Left cardiac atrium (tissue), 4 donors: ENCODE measurements at regions of chr12 and their contacts with region 1.

Region 1: DNA sequence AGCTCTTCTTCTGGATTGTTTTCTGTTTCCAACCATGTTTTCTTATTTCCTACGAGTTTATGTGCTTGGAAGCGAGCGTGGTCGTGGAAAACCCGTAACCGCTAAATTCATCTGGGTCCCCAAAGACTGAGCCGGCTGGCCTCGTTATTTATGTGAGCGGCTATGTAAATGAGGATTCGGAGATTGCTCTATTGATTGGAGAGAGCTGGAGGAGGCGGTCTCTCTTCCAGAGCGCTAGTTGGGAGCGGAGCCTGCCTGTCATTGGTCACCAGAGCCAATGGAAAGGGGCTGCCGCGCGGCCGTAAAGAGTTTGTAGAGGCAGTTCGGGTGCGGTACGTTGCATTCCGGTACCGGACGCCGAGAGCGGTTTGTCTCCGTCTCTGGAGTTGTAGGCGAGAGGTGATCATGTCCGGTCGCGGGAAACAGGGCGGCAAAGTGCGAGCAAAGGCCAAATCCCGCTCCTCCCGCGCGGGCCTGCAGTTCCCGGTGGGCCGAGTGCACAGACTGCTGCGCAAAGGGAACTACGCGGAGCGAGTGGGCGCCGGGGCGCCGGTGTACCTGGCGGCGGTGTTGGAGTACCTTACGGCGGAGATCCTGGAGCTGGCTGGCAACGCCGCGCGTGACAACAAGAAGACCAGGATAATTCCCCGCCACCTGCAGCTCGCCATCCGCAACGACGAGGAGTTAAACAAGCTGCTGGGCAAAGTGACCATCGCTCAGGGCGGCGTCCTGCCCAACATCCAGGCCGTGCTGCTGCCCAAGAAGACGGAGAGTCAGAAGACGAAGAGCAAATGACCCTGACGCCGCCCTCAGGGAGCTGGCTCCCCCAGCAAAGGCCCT is 29.0 kb downstream of the WBP11 start:
- DNase-seq: peak; percentile 96
- ATAC-seq: peak; percentile 85 to 88

Region 2: GRCh38 chr12:14239350-14239934 is 534.8 kb before region 1 on chr12:
- intact Hi-C with region 1: no loop called
- DNase-seq: peak; percentile 36
- ATAC-seq: peak; percentile 87 to 93

Region 3: DNA sequence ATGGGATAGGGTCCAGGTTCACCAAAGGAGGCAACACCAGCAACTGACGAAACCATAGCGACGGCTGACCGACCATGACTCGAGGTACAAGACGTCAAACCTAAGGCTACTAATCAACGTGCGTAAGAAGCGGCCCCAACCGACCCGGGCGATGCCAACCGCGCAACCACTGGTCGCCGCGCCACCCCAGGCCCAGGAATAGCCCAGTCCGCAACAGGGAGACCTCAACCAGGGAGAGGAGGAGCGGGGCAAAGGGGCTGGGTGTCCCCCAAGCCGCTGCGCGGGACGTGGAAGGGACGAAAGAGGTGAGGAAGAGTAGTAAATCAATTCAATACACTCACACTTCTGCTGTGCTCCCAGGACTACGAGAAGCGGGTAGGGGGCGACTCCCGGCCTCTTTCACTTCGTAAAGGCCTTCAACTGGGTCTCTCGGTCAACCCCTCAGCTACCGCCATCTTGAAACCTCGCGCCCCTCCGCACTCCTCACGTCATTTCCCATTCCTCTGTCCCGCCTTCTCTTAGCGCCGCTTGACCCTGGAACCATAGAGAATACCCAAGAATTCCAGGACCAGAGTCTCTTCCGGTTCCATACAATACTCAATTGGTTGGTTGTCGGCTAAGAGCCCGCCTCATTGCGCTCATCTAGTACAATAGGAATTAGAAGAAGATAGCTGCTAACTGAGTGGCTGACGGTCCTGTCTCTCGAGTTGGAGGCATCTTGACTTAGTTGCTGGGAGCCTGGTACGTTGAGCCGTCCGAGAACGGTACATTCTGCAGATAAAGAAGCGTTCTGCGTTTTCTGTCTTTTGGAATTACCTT is 28.9 kb after region 1 on chr12 and contains the starts of genes C12orf60 and WBP11:
- intact Hi-C with region 1: loop called in 1 of 2 experiments (anchors 2 kb)
- DNase-seq: peak; percentile 95
- ATAC-seq: peak; percentile 100
- total RNA-seq, gene C12orf60: 0.94 to 1.1 TPM
- total RNA-seq, gene WBP11: 41.0 to 56.0 TPM

Region 4: DNA sequence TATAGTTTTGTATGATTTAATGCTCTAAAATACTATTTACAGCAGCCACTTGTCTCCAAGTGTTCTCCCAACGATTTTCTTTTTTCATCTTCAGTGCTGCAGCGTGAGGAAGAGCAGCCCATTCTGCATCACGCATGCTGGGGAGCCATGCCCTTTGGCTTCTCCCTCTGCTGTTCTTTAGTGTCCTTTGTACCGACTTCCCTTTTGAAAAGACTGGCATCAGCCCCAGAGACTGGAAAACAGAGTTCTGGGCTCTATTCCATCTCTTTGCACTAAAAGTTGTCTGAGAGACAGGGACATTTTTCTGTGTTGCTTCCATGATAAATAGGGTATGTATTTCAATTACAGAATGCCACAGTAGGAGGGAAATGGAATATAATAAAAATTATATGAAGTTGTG is 341.8 kb after region 1 on chr12:
- intact Hi-C with region 1: no loop called
- DNase-seq: no peak
- ATAC-seq: peak; percentile 17 to 78